ENCODE measurements at regions of chr3 and their contacts with region 1.

Region 1: GRCh38 chr3:113912552-113913236 is 35.1 kb upstream of the ZDHHC23 start:
- DNase-seq: no peak
- H3K4me3 ChIP-seq: no peak overlapping the region
- H3K27ac ChIP-seq: no peak overlapping the region
- H3K4me1 ChIP-seq: no peaks in the 10 kb centered on the region
- H3K27me3 ChIP-seq: no peaks in the 10 kb centered on the region
- CTCF ChIP-seq: peak; percentile 41 to 54 (median 46)
- EP300 ChIP-seq: no peak
- POLR2A ChIP-seq: no peak

Region 2: DNA sequence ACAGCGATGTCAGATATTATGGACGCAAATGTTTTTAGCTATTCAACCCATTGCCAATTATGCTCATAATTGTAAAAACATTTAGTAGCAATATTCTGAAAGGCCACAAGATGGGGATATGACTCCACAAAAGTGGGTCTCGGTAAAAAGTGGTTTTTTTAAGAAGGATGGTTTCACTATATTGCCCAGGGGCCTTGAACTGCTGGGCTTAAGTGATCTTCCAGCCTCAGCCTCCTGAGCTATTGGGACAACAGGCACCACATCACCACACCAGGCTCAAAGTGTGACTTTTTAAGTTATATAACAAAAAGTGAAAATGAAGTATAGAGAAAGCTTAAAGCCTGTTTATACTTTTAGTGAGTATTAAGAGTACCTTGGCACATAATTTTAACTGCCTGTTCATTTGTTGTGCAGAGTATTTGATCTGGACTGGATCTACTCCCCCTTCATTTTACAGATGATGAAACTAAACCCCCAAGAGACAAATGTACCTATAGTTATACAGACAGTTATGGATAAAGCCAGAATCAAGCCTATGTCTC is 176.1 kb before region 1 on chr3:
- intact Hi-C with region 1: loop called (anchors 10 kb)
- DNase-seq: no peak
- H3K4me3 ChIP-seq: peak overlapping the region in 2 of 4 donors; percentile 10 to 20
- H3K27ac ChIP-seq: peak overlapping the region; percentile 19 to 54 (median 34)
- H3K4me1 ChIP-seq: peaks cover 29 to 76% (median 66%) of the 10 kb centered on the region in 4 donors
- H3K27me3 ChIP-seq: no peaks in the 10 kb centered on the region
- CTCF ChIP-seq: peak; percentile 68 to 78 (median 72)
- EP300 ChIP-seq: no peak
- POLR2A ChIP-seq: no peak

Region 3: GRCh38 chr3:114299421-114299820 is 386.7 kb after region 1 on chr3:
- intact Hi-C with region 1: no loop called
- DNase-seq: no peak
- H3K4me3 ChIP-seq: no peak overlapping the region
- H3K27ac ChIP-seq: no peak overlapping the region
- H3K4me1 ChIP-seq: no peaks in the 10 kb centered on the region
- H3K27me3 ChIP-seq: no peaks in the 10 kb centered on the region
- CTCF ChIP-seq: peak in 1 of 3 experiments; percentile 7
- EP300 ChIP-seq: no peak
- POLR2A ChIP-seq: no peak

Measured in esophagus muscularis mucosa (tissue), 4 donors.